HEK293 (cell line): ENCODE measurements at regions of chr6 and their contacts with region 1.

Region 1: GRCh38 chr6:3929281-3929798 is 80.2 kb downstream of the FAM50B start:
- H3K4me3 ChIP-seq: no peak overlapping the region
- H3K27ac ChIP-seq: no peak overlapping the region
- H3K4me1 ChIP-seq: no peaks in the 10 kb centered on the region
- CTCF ChIP-seq: no peak

Region 2: DNA sequence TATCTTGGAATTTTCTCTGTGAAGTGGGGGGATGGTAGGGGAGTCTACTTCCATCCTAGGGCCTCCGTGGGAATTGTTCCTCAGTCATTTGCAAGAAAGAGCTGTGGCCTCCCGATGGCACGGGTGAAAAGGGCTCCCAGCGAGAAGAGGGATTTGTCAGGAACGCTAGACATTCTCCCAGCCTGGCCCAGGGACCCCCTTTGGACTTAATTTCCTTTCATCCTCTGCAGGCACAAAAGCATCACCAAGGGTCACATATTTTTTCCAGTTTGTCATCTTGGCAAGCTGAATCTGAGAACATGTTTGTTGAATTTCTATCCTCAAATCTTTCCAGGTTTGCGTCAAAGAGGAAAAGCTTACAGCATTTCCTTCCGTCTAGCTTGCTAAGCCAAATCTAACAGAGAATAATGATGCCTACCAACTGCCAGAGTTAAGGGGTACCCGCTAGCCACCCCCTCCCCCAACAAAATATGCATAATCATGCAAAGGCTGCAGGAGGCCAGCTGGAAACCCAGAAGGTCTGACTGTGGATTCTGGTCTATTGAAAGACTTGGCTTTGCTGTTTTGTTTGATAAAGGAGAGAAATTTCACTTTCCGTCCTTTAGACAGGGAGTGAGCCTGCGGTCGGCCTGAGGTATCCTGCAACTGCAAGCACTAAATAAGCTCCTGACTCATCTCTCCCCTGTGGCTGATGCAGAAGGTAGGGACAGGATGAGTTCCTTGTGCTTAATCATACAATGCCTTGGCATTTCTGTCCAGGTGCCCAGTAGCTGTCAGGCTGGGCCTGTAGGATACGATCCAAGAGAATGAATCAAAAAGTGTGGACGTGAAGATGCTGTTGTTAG is 647.5 kb before region 1 on chr6:
- CTCF ChIA-PET with region 1: interaction called, 10 read pairs
- POLR2A ChIA-PET with region 1: no interaction called
- H3K4me3 ChIP-seq: no peak overlapping the region
- H3K27ac ChIP-seq: no peak overlapping the region
- H3K4me1 ChIP-seq: no peaks in the 10 kb centered on the region
- CTCF ChIP-seq: no peak

Region 3: GRCh38 chr6:3759646-3760232 is 169.6 kb before region 1 on chr6:
- CTCF ChIA-PET with region 1: interaction called, 14 read pairs
- POLR2A ChIA-PET with region 1: no interaction called
- H3K4me3 ChIP-seq: no peak overlapping the region
- H3K27ac ChIP-seq: no peak overlapping the region
- H3K4me1 ChIP-seq: no peaks in the 10 kb centered on the region
- CTCF ChIP-seq: no peak

Region 4: GRCh38 chr6:3848925-3849605 is 80.3 kb before region 1 on chr6 and contains the start of gene FAM50B:
- CTCF ChIA-PET with region 1: interaction called, 68 read pairs
- POLR2A ChIA-PET with region 1: interaction called, 7 read pairs
- H3K4me3 ChIP-seq: peak within 1 kb of the TSS; percentile 52
- H3K27ac ChIP-seq: peak within 1 kb of the TSS; percentile 37; the same call in 1 of the 2 replicates
- H3K4me1 ChIP-seq: no peaks in the 10 kb centered on the region
- CTCF ChIP-seq: no peak

Region 5: DNA sequence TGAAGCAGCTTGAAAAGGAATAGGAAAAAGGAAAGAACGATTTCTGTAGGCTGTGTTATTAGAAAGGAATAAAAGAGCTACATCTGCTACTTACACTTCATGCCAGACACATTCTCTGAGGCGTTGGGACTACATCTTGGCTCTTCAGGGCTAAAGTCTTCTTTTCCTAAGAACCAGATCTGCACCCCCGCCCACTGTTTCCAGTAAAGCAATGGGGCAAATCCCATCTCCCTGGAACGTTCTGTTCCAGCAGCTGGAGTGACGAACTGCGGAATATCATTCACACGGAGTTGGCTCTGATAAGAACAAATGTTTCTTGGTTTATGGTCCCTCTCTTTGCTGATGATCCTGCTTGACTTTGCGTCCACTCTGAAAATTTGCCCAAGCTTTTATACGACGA is 53.2 kb before region 1 on chr6:
- CTCF ChIA-PET with region 1: interaction called, 15 read pairs
- POLR2A ChIA-PET with region 1: no interaction called
- H3K4me3 ChIP-seq: no peak overlapping the region
- H3K27ac ChIP-seq: no peak overlapping the region
- H3K4me1 ChIP-seq: no peaks in the 10 kb centered on the region
- CTCF ChIP-seq: no peak

Region 6: DNA sequence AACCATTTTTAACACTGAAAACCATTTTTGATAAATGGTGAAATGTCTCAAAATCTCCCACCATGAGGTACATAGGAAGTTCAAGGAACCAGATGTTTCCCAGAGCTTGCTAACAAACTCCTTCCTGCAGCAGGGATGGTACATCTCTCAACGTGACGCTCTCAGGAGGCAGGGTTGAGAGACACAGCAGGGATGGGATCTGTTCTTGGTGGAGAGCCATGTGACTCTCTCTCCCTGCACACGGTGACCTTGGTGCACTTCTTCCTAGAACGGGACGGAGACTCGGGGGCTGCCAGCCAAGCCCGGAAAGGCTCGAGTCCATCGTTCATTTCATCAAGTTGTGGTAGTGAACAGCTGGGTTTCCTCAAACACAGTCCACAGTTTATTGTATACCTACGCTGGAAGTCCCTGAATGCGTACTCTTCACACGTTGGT is 14.0 kb after region 1 on chr6:
- CTCF ChIA-PET with region 1: interaction called, 14 read pairs
- POLR2A ChIA-PET with region 1: no interaction called
- H3K4me3 ChIP-seq: no peak overlapping the region
- H3K27ac ChIP-seq: no peak overlapping the region
- H3K4me1 ChIP-seq: no peaks in the 10 kb centered on the region
- CTCF ChIP-seq: no peak

Region 7: GRCh38 chr6:4078691-4079471 is 149.5 kb after region 1 on chr6 and contains the start of gene FAM217A:
- CTCF ChIA-PET with region 1: no interaction called
- POLR2A ChIA-PET with region 1: no interaction called
- H3K4me3 ChIP-seq: no peak within 1 kb of the TSS
- H3K27ac ChIP-seq: no peak within 1 kb of the TSS
- H3K4me1 ChIP-seq: no peaks in the 10 kb centered on the region
- CTCF ChIP-seq: no peak